Heart right ventricle (tissue), 16 donors: ENCODE measurements at regions of chr11 and their contacts with region 1.

Region 1: DNA sequence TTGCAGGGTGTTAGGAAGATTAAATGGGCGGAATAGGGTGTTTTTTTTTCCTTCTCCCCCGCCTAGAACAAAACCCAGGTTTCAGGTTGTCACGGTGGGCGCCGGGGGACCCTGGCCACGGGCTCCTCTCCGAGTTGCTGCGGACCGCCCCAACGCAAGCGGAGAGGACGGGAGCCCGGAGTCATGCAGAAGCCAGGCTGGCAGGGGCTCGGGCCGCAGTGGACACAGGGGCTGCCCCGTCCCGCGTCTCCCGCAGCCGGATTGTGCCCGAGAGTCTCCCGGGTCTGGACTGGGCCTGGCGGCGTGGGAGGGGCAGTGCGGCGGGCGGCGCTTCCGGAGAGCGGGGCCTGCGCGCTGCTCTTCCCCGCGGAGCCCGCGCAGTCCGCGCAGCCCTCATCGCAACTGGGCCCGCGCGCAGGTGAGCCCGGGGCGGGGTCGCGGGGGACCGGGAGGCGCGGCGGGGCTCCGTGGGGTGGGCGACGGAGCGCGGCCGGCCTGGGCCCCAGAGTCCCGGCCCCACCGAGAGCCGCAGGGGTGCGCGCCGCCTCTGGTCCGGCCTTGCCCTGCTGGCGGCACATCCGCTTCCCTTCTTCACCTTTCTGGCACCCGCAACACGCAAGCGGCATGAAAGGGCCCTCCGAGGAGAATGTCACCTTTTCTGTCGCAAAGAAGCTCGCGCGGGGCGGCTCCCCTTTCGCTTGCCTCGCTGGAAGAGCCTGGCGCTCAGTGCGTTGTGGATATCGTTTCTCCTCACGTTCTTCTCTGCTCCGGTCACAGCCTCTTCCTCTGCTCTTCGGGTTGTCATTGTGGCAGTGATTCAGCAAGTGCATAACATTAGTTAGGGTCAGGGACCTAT is at the start of gene TIRAP:
- DNase-seq: peak; percentile 69 to 79
- ATAC-seq: peak; percentile 89 to 95 (median 92)
- H3K4me3 ChIP-seq: peak within 1 kb of the TSS; percentile 49 to 87 (median 78)
- H3K27ac ChIP-seq: peak within 1 kb of the TSS; percentile 55 to 97 (median 93)
- H3K4me1 ChIP-seq: peaks cover 0 to 51% (median 11%) of the 10 kb centered on the region in 9 donors
- H3K27me3 ChIP-seq: no peaks in the 10 kb centered on the region
- CTCF ChIP-seq: peak in 1 of 9 donors; percentile 35
- total RNA-seq, gene TIRAP: 6.3 to 10.1 (median 8.6) TPM

Region 2: DNA sequence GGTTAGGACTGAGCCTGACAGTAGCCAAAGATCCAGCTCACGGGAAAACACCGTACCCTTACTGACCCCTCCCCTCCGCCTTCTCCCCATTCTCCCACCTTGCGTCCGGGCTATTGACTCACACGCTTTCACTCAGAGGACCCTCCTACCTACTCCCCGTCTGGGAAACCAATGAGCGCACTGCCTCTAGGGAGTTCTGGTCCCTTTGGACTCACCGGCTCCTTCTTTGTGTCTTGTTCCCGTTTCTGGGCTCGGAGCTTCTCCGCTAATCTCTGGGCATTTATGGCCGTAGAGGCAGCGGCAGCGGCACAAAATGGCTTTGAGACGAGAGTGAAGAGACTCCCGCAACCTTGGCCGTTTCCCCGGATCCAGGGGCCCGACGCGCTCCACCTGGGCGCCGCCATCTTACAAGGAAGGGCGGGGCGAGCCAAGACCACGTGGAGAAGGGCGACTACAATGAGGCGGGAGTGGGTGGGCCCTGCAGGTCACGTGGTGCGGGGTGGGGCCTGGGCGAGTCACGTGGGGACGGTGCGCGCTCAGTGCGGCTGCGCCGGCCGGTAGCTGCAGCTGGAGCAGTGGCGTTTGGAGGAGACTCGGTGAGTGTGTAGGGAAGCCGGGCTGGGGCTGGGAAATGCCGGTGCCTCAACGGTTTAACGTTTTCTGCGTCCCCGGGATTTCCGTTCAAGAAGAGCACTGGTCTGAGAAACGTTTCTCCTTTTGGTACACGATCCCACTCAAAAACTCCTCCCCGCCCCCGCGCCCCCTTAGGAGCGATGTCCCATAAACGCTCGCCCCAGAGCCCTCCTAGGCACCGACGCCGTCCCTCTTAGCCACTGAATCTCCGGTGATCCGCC is 71.5 kb before region 1 on chr11 and contains the starts of genes FAM118B and RPUSD4:
- intact Hi-C with region 1: loop called in 1 of 10 experiments (anchors 5 kb)
- DNase-seq: peak; percentile 98 to 99
- ATAC-seq: peak; percentile 98 to 100 (median 100)
- H3K4me3 ChIP-seq: peak within 1 kb of the TSS; percentile 79 to 99 (median 92)
- H3K27ac ChIP-seq: peak within 1 kb of the TSS in 9 of 10 donors; percentile 9 to 90 (median 79)
- H3K4me1 ChIP-seq: peaks cover 4 to 56% (median 42%) of the 10 kb centered on the region in 9 donors
- H3K27me3 ChIP-seq: no peaks in the 10 kb centered on the region
- CTCF ChIP-seq: peak in 1 of 9 donors; percentile 5
- total RNA-seq, gene FAM118B: 18.3 to 52.8 (median 24.7) TPM
- total RNA-seq, gene RPUSD4: 34.5 to 70.0 (median 37.4) TPM

Region 3: DNA sequence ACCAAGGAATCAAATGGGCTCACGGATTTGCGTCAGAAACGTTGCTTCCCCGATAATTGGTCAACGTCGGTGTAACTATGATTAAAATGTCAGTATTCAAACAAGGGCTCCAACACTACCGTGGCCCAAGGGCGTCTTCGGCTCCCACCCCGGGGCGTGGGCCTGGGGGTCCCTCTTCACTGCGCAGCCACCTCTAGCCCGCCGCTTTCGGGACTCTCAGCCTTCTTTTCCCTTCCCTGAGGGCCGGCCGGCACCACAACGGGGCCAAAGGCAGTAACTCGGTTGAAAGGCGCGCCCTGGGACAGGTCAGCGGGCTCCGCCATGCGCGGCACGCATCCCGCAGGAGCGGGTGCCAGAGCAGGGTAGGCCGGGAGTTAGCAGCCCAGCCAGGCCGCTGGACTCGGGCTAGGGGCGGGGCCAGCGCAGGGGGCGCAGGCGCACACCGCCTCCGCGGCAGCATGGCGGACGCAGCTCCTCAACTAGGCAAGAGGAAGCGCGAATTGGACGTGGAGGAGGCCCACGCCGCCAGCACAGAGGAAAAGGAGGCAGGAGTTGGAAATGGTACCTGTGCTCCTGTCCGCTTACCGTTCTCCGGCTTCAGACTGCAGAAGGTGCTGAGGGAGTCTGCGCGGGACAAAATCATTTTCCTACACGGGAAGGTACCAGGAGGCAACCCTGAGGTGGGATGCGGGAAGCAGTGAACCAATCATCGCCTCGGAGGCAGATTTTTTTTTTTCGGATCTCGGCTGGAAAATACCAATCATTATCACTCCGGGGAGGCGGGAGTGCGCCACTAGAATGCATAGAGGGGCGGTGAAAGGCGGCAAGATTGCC is 20.9 kb after region 1 on chr11 and contains the start of gene DCPS:
- intact Hi-C with region 1: loop called in 1 of 10 experiments (anchors 2 kb)
- DNase-seq: peak; percentile 89 to 92
- ATAC-seq: peak; percentile 99 to 100 (median 100)
- H3K4me3 ChIP-seq: peak within 1 kb of the TSS; percentile 53 to 72 (median 62)
- H3K27ac ChIP-seq: peak within 1 kb of the TSS; percentile 49 to 95 (median 90)
- H3K4me1 ChIP-seq: peaks cover 4 to 26% (median 13%) of the 10 kb centered on the region in 9 donors
- H3K27me3 ChIP-seq: no peaks in the 10 kb centered on the region
- CTCF ChIP-seq: peak in 1 of 9 donors; percentile 11
- total RNA-seq, gene DCPS: 6.5 to 17.3 (median 10.6) TPM